OCI-LY7 (cell line): ENCODE measurements at regions of chr12 and their contacts with region 1.

Region 1: GRCh38 chr12:121536899-121537813 is 43.7 kb downstream of the KDM2B start:
- DNase-seq: peak; percentile 89
- H3K4me3 ChIP-seq: peak overlapping the region; percentile 73
- H3K27ac ChIP-seq: peak overlapping the region; percentile 93
- H3K4me1 ChIP-seq: peaks cover 48% of the 10 kb centered on the region
- CTCF ChIP-seq: 0 out of 2 replicates have a peak, but pooled peaks have one; percentile 14

Region 2: DNA sequence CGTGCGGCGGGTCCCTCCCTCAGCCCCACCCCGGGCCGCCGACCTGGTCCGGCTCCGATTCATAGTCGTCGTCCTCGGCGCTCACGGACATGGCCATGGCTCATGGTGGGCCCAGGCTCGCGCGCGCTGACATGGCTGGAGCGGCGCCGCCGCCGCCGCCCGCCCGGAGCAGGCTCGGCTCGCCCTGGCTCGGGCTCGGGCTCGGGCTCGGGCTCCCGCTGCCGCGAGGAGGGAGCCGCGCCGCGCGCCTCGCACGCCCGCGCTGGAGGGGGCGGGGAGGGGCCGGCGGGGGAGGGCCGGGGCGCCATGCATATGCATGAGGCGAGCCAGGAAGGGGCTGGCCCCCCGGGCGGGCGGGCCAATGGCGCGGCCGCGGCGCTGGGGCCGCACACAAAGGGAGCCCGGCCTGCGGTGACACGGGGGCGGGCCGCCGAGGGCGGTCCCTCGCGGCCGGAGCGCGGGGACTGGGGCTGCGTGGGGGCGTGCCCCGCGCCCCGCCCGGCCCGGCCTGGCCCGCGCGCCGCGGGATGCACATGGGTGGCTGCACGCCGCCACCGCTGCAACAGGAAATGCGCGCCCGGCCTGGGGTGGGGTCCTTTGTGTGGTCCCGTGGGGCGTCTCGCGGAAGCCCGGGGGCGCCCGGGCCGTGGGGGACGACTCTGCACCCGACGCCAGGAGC is 69.9 kb before region 1 on chr12:
- CTCF ChIA-PET with region 1: no interaction called
- POLR2A ChIA-PET with region 1: interaction called, 3 read pairs
- intact Hi-C with region 1: loop called (anchors 1 kb)
- DNase-seq: peak; percentile 94
- H3K4me3 ChIP-seq: peak overlapping the region; percentile 74
- H3K27ac ChIP-seq: peak overlapping the region; percentile 68
- H3K4me1 ChIP-seq: peaks cover 28% of the 10 kb centered on the region
- CTCF ChIP-seq: no peak

Region 3: GRCh38 chr12:121499929-121500793 is 37.0 kb before region 1 on chr12:
- CTCF ChIA-PET with region 1: no interaction called
- POLR2A ChIA-PET with region 1: interaction called, 4 read pairs
- intact Hi-C with region 1: loop called (anchors 1 kb)
- DNase-seq: peak; percentile 77
- H3K4me3 ChIP-seq: peak overlapping the region; percentile 45
- H3K27ac ChIP-seq: no peak overlapping the region
- H3K4me1 ChIP-seq: peaks cover 13% of the 10 kb centered on the region
- CTCF ChIP-seq: peak; percentile 96

Region 4: DNA sequence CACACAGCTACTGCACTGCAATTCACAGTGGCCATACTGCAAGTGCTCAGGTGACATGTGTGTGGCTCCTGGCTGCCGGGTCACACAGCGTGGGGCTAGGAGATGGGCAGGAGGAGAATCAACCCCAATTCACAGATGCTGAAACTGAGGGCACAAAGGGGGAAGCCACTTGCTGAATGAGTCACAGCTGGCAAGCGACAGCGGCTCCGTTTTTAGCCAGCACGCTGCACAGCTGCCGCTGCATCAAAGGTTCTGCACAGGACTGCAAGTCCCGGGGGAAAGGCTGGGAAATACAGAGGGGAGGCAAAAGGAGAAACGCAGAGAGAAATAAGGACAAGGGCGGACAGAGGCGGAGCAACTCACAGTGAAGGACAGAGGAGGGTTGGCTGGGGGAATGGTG is 14.2 kb before region 1 on chr12:
- CTCF ChIA-PET with region 1: no interaction called
- POLR2A ChIA-PET with region 1: interaction called, 8 read pairs
- intact Hi-C with region 1: loop called (anchors 1 kb)
- DNase-seq: peak; percentile 89
- H3K4me3 ChIP-seq: peak overlapping the region; percentile 54
- H3K27ac ChIP-seq: peak overlapping the region; percentile 84
- H3K4me1 ChIP-seq: peaks cover 45% of the 10 kb centered on the region
- CTCF ChIP-seq: no peak

Region 5: GRCh38 chr12:121579981-121580868 is 43.1 kb after region 1 on chr12:
- CTCF ChIA-PET with region 1: no interaction called
- POLR2A ChIA-PET with region 1: interaction called, 4 read pairs
- intact Hi-C with region 1: loop called (anchors 2 kb)
- DNase-seq: peak; percentile 77
- H3K4me3 ChIP-seq: peak overlapping the region; percentile 79
- H3K27ac ChIP-seq: peak overlapping the region; percentile 78
- H3K4me1 ChIP-seq: peaks cover 29% of the 10 kb centered on the region
- CTCF ChIP-seq: no peak